ENCODE measurements at regions of chr5 and their contacts with region 1.

Region 1: DNA sequence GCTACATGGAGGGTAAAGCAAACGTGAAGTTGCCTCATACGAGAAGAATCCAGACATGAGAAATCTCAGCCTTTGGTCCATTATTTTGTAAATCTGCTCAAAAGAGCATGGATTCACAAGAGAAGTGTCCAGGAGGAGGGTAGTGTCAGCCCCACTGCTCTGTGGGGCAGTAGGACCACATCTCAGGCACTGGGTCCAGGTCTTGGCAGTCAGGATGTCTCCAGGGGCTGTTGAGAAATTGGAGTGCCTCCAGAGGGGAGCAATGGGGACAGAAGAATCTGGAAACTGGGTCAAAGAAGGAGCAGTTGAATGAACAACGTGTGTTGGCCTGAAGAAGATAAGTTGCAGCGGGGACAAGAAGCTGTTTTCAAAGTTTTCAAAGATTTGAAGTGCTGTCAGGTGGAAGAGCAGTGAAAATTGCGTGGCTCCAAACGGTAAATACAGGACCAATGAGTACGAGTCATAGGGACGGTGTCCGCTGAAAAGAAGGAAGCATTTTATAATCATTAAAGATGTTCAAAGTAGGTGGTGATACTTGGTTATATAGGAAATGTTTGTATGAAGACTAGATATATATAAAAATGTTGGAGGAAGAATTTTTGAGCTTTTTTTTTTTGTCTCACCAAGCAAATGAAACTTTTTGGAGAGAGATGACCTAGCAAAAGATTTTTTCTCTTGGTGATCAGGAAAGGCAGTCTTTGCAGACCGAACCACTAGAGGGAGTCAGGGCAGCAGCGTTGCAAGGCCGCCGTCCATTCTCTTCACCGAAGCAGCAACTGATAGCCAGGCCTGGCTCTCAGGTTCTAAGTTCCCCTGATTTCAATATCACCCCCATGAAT is 57.1 kb upstream of the ZBED3 start:
- DNase-seq: peak; percentile 80
- H3K4me3 Mint-ChIP-seq: no peak overlapping the region
- H3K27ac Mint-ChIP-seq: no peak overlapping the region
- H3K4me1 Mint-ChIP-seq: peaks cover 27% of the 10 kb centered on the region
- H3K27me3 Mint-ChIP-seq: peaks cover 3% of the 10 kb centered on the region

Region 2: DNA sequence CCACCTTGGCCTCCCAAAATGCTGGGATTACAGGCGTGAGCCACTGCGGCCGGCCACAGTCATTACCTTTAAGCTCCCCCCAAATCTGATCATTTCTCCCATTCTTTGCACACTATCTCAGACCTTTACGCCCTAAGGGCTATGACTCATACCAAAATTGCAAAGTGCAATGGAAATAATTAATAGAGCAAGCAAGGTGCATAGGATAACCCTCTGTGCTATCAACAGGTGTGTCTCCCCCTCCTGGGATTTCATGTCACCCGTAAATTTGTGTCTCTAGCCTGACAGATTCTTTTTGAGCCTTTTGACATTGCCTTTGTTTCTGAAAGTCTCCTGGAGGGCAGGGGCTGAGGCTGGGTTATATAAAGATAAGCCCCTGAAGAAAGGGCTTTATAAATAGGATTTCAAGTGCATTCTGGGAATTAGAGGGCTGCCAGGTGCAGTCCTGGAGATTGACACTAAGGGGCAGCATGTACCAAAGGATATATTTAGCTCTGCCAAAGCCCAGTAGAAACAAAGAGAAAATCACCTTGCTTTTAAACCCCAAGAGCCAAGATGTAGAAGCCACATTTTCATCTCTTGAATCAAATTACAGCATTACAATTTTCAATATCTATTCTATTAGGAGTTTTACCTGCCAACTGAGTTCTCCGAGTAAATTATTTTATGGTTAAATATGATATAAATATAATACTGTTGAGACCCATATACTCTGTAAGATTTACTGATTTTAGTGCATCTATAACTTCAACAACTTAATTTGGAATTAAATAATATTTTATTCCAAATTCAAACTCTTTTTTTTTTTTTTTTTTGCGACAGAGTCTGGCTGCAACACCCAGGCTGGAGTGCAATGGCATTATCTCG is 276.2 kb before region 1 on chr5:
- CTCF ChIA-PET with region 1: interaction called, 3 read pairs
- intact Hi-C with region 1: loop called (anchors 2 kb)
- DNase-seq: peak; percentile 83
- H3K4me3 Mint-ChIP-seq: no peak overlapping the region
- H3K27ac Mint-ChIP-seq: no peak overlapping the region
- H3K4me1 Mint-ChIP-seq: no peaks in the 10 kb centered on the region
- H3K27me3 Mint-ChIP-seq: no peaks in the 10 kb centered on the region

Region 3: GRCh38 chr5:77155179-77155785 is 11.1 kb after region 1 on chr5:
- CTCF ChIA-PET with region 1: interaction called, 28 read pairs
- intact Hi-C with region 1: no loop called
- DNase-seq: peak; percentile 66
- H3K4me3 Mint-ChIP-seq: no peak overlapping the region
- H3K27ac Mint-ChIP-seq: peak overlapping the region; percentile 60
- H3K4me1 Mint-ChIP-seq: peaks cover 27% of the 10 kb centered on the region
- H3K27me3 Mint-ChIP-seq: no peaks in the 10 kb centered on the region

Region 4: DNA sequence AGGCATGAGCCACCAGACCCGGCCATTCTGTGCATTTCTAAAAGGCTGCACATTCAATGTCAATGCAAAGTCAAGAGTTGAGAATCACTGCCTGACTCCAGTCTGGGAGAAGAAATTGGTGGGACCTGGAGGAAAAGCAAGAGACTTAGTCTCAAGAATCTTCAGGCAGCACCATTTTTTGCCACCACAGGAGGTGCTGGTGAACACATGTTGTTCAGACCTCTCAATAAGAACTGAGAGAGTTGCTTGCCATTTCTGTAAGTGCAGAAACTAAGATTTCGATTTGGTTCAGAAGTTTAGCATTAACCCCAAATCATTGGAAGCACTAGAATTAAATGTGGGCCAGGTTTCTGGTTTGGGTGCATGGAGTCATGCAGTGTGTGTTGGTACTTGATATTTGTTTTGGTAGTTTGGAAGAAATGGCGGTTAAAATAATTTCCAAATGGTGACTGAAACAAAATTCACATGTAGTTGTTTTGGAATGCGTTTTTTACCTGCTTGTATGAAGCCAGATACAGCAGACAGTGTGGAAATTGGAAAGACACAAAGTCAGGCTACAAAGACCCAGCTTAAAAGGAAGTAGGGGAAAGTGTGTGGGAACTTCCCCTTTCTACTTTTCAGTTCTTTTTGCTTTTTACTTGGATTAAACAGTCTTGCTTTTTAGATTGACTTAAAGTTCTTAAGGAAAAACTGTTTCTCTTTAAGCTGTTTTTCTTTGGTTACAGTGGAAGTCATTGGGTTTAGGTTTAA is 86.7 kb after region 1 on chr5:
- CTCF ChIA-PET with region 1: no interaction called
- intact Hi-C with region 1: loop called (anchors 2 kb)
- DNase-seq: peak; percentile 36
- H3K4me3 Mint-ChIP-seq: no peak overlapping the region
- H3K27ac Mint-ChIP-seq: no peak overlapping the region
- H3K4me1 Mint-ChIP-seq: peaks cover 6% of the 10 kb centered on the region
- H3K27me3 Mint-ChIP-seq: peaks cover 28% of the 10 kb centered on the region

Region 5: GRCh38 chr5:77437194-77437593 is 293.0 kb after region 1 on chr5:
- CTCF ChIA-PET with region 1: interaction called, 12 read pairs
- intact Hi-C with region 1: loop called (anchors 1 kb)
- DNase-seq: peak; percentile 21
- H3K4me3 Mint-ChIP-seq: no peak overlapping the region
- H3K27ac Mint-ChIP-seq: no peak overlapping the region
- H3K4me1 Mint-ChIP-seq: no peaks in the 10 kb centered on the region
- H3K27me3 Mint-ChIP-seq: no peaks in the 10 kb centered on the region

Region 6: DNA sequence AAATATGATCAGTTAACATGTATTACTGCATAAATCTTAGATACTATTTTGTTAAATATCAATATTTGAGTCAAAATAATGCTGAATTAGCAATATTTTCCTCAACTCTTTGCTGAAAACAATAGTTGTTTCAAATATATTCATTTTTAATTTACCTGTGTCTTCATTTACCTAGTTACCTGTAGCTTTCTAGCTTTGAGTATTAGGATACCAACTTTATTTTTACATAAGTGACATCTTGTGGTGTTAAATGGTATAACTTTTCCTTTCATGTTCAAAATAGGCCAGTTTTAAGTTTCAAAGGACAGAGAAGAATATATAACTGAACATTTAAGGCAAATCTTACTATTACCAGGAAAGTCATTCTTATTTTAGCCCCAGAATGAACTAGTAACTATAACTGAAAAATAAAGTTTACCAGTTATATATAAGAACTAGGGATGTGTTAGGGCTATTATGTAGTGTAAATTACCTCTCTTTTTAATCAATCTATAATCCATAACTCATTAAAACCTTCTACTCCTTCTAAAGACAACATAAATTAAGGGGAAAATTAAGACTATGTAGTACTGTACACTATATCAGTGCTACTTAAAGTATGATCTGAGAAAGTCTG is 1125.0 kb after region 1 on chr5:
- CTCF ChIA-PET with region 1: no interaction called
- intact Hi-C with region 1: loop called (anchors 10 kb)
- DNase-seq: no peak
- H3K4me3 Mint-ChIP-seq: no peak overlapping the region
- H3K27ac Mint-ChIP-seq: no peak overlapping the region
- H3K4me1 Mint-ChIP-seq: peaks cover 11% of the 10 kb centered on the region
- H3K27me3 Mint-ChIP-seq: no peaks in the 10 kb centered on the region

Measured in activated naive CD4-positive, alpha-beta T cell treated with anti-CD3 and anti-CD28 coated beads for 36 hours (primary cell).